ENCODE measurements at regions of chr7 and their contacts with region 1.

Region 1: DNA sequence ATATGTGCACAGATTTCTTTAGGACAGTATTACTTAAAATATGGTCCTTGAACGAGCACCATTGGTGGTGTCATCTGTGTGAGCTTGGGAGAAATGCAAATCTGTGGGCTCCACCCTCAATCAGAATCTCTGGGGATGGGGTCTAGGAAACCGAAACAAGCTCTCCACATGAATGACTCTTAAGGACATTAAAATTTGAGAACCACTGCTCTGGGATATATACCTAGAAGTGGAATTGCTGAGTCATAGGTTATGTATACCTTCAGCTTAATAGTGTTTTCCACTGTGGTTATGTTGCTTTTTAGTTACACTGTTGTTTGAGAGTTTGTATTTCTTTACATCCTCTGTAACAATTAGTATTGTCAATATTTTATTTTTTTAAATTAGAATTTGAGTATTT is 24.0 kb downstream of the ZNRF2 start:
- DNase-seq: no peak
- ATAC-seq: peak; percentile 66
- H3K4me3 ChIP-seq: no peak overlapping the region
- H3K27ac ChIP-seq: no peak overlapping the region
- H3K4me1 ChIP-seq: peaks cover 0 to 9% of the 10 kb centered on the region in 2 experiments; a peak in 3 of 5 replicates
- H3K27me3 ChIP-seq: no peaks in the 10 kb centered on the region
- CTCF ChIP-seq: no peak
- EP300 ChIP-seq: no peak
- POLR2A ChIP-seq: no peak
- RAD21 ChIP-seq: no peak

Region 2: GRCh38 chr7:30322271-30323005 is 14.0 kb after region 1 on chr7:
- CTCF ChIA-PET with region 1: no interaction called
- POLR2A ChIA-PET with region 1: interaction called, 14 read pairs
- in situ Hi-C with region 1: no loop called
- intact Hi-C with region 1: no loop called
- DNase-seq: peak in 2 of 4 experiments; percentile 27 to 32
- ATAC-seq: peak; percentile 84
- H3K4me3 ChIP-seq: peak overlapping the region; percentile 8; the same call in 1 of the 2 replicates
- H3K27ac ChIP-seq: peak overlapping the region; percentile 48; the same call in 2 of the 3 replicates
- H3K4me1 ChIP-seq: peaks cover 0 to 9% of the 10 kb centered on the region in 2 experiments; a peak in 2 of 5 replicates
- H3K27me3 ChIP-seq: no peaks in the 10 kb centered on the region
- CTCF ChIP-seq: no peak
- EP300 ChIP-seq: no peak
- POLR2A ChIP-seq: no peak
- RAD21 ChIP-seq: no peak